ENCODE measurements at regions of chr11 and their contacts with region 1.

Region 1: DNA sequence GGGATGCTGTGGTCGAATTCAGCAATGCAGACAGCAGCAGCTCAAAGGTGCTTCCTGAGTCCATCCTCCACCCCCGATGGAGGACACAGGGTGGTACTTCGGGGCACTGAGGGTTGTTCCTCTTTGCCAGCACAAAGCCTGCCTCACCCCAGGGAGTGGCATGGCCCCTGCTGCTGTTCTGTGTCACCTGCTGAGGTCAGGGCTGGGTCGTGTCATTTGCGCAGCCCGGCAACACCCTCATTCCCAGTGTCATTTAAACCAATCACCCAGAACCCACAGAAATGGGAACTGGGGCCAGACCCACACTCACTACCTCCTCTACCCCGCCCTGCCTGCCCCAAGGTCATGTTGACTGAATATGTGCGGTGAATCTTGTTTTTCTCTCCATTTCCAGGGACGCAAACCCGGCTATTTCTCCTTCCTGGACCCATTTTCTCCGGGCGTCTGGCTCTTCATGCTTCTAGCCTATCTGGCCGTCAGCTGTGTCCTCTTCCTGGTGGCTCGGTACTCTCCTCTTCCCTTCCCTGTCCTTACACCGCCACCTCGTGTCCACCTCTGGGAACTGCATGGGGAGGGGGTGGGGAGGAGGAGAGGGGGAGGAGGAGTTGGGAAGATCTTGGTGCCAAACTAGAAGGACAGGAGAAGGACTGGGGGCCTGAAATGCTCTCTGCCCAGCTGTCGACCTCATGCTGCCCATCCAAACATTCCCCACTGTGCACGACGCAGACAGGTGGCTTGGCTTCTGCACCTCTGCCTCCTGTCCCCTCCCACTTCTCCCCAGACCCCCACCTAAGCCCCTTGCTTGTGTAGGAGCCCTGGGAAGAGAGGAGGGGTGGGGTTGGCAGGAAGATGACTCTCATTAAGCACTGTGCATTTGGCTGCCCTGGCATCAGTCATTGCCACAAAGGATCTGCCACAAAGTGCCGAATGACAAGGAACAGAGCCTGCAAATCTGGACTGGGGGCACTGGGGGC is 71.2 kb upstream of the TBCEL start:
- DNase-seq: peak; percentile 51
- ATAC-seq: peak; percentile 90
- H3K4me3 ChIP-seq: peak overlapping the region in 1 of 2 experiments; percentile 10; a peak in 1 of 4 replicates
- H3K27ac ChIP-seq: no peak overlapping the region
- H3K4me1 ChIP-seq: no peaks in the 10 kb centered on the region
- H3K27me3 ChIP-seq: peaks cover 28% of the 10 kb centered on the region
- CTCF ChIP-seq: peak; percentile 95

Region 2: GRCh38 chr11:120682866-120683265 is 269.9 kb before region 1 on chr11:
- CTCF ChIA-PET with region 1: no interaction called
- POLR2A ChIA-PET with region 1: no interaction called
- in situ Hi-C with region 1: no loop called
- intact Hi-C with region 1: loop called (anchors 10 kb)
- DNase-seq: no peak
- ATAC-seq: no peak
- H3K4me3 ChIP-seq: no peak overlapping the region
- H3K27ac ChIP-seq: no peak overlapping the region
- H3K4me1 ChIP-seq: no peaks in the 10 kb centered on the region
- H3K27me3 ChIP-seq: peaks cover 25% of the 10 kb centered on the region
- CTCF ChIP-seq: no peak